Activated T-helper 1 cell treated with anti-CD3 and anti-CD28 coated beads, Interleukin-12 subunit alpha, Interleukin-12 subunit beta, Interleukin-2, Interleukin-4 antibody, amounts not matched to agents 30 ng/mL and 10 ng/mL and 1 ng/mL, durations not matched to agents 14 hours and 24 hours and 36 hours (primary cell): ENCODE measurements at regions of chr19 and their contacts with region 1.

Region 1: GRCh38 chr19:8513687-8514504 is at the start of gene ZNF414:
- DNase-seq: peak; percentile 92
- H3K4me3 Mint-ChIP-seq: peak within 1 kb of the TSS; percentile 93
- H3K27ac Mint-ChIP-seq: peak within 1 kb of the TSS; percentile 98
- H3K4me1 Mint-ChIP-seq: peaks cover 52% of the 10 kb centered on the region
- H3K27me3 Mint-ChIP-seq: no peaks in the 10 kb centered on the region
- total RNA-seq, gene ZNF414: 22.1 and 23.6 TPM in 2 replicates

Region 2: GRCh38 chr19:8444645-8445487 is 69.0 kb before region 1 on chr19 and contains the start of gene HNRNPM:
- intact Hi-C with region 1: loop called (anchors 1 kb)
- DNase-seq: peak; percentile 100
- H3K4me3 Mint-ChIP-seq: peak within 1 kb of the TSS; percentile 95
- H3K27ac Mint-ChIP-seq: peak within 1 kb of the TSS; percentile 98
- H3K4me1 Mint-ChIP-seq: peaks cover 40% of the 10 kb centered on the region
- H3K27me3 Mint-ChIP-seq: peaks cover 1% of the 10 kb centered on the region
- total RNA-seq, gene HNRNPM: 323 and 331 TPM in 2 replicates

Region 3: DNA sequence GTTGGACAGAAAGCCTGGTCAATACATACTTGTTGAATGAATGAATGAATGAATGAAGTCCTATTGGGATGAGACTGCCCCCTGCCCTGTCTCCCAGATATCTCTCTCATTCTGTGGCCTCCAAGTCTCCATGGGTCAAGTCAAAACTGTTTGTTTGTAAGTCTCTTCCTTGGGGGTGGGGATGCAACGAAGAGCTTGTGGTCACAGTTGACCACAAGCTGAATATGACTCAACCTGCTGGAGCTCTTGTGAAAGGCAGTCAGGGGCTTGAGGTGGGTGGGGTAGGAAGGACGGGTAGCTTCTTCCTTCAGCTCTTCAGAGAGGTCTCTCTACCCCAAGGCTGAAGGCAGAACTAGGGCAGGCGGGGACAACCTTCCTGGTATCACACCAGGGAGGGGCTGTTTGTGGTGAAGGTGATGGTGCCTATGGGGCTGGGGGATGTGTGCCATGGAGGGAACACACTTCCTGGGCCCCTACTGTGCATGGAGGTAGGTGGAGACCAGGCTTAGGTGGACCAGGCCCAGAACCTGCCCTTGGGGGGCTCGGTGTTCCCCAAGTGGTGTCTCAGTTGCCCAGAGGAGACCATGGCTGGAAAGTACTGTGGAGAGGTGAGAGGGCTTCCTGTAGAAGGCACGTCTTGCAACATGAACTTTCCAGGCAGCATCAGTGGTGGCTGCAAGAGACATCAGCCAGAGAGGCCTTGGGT is 55.3 kb after region 1 on chr19:
- intact Hi-C with region 1: loop called (anchors 1 kb)
- DNase-seq: peak; percentile 78
- H3K4me3 Mint-ChIP-seq: peak overlapping the region; percentile 75
- H3K27ac Mint-ChIP-seq: peak overlapping the region; percentile 97
- H3K4me1 Mint-ChIP-seq: peaks cover 62% of the 10 kb centered on the region
- H3K27me3 Mint-ChIP-seq: peaks cover 2% of the 10 kb centered on the region